CD4-positive, alpha-beta memory T cell (primary cell): ENCODE measurements at regions of chr7 and their contacts with region 1.

Region 1: GRCh38 chr7:7640221-7641128 is at the start of gene UMAD1:
- DNase-seq: peak; percentile 97 to 100 (median 100)
- H3K4me3 ChIP-seq: peak within 1 kb of the TSS; percentile 79 to 97
- H3K4me3 Mint-ChIP-seq: peak within 1 kb of the TSS; percentile 91 to 98 (median 96)
- H3K27ac ChIP-seq: peak within 1 kb of the TSS; percentile 91
- H3K27ac Mint-ChIP-seq: peak within 1 kb of the TSS; percentile 95 to 99 (median 99)
- H3K4me1 ChIP-seq: peaks cover 28% of the 10 kb centered on the region
- H3K4me1 Mint-ChIP-seq: peaks cover 25 to 62% (median 42%) of the 10 kb centered on the region in 4 donors
- H3K27me3 ChIP-seq: no peaks in the 10 kb centered on the region
- H3K27me3 Mint-ChIP-seq: no peaks in the 10 kb centered on the region
- total RNA-seq, gene UMAD1: 23.5 to 25.1 TPM

Region 2: GRCh38 chr7:7585253-7585928 is 55.1 kb before region 1 on chr7:
- CTCF ChIA-PET with region 1: no interaction called
- POLR2A ChIA-PET with region 1: no interaction called
- intact Hi-C with region 1: no loop called
- DNase-seq: no peak
- H3K4me3 ChIP-seq: no peak overlapping the region
- H3K4me3 Mint-ChIP-seq: no peak overlapping the region
- H3K27ac ChIP-seq: no peak overlapping the region
- H3K27ac Mint-ChIP-seq: peak overlapping the region in 1 of 7 donors; percentile 59
- H3K4me1 ChIP-seq: no peaks in the 10 kb centered on the region
- H3K4me1 Mint-ChIP-seq: peaks cover 0 to 4% (median 3%) of the 10 kb centered on the region in 4 donors
- H3K27me3 ChIP-seq: no peaks in the 10 kb centered on the region
- H3K27me3 Mint-ChIP-seq: no peaks in the 10 kb centered on the region

Region 3: DNA sequence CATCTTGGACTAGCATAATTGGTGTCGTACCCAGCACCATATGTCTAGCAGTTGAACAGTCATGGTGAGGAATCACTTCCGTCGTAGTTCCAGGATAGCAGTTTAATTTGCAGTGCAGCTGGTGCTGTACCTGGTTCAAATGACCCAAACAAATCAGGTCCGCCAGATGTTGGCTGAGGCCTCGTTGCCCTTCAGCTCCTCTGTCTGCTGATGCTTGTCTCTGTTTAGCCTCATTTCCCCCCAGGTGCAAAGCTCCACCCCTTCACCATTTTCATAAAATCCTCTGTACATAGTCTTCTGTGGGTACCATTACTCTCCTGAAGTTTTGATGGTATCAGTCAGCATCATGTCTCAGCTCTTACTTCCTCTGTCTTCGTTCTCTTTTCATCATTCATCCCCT is 35.2 kb after region 1 on chr7:
- CTCF ChIA-PET with region 1: no interaction called
- POLR2A ChIA-PET with region 1: interaction called, 5 read pairs
- intact Hi-C with region 1: loop called (anchors 5 kb)
- DNase-seq: no peak
- H3K4me3 ChIP-seq: no peak overlapping the region
- H3K4me3 Mint-ChIP-seq: no peak overlapping the region
- H3K27ac ChIP-seq: no peak overlapping the region
- H3K27ac Mint-ChIP-seq: peak overlapping the region in 6 of 7 donors; percentile 45 to 77 (median 65)
- H3K4me1 ChIP-seq: peaks cover 22% of the 10 kb centered on the region
- H3K4me1 Mint-ChIP-seq: peaks cover 40 to 59% (median 47%) of the 10 kb centered on the region in 4 donors
- H3K27me3 ChIP-seq: no peaks in the 10 kb centered on the region
- H3K27me3 Mint-ChIP-seq: no peaks in the 10 kb centered on the region

Region 4: GRCh38 chr7:7761340-7761980 is 121.0 kb after region 1 on chr7:
- CTCF ChIA-PET with region 1: interaction called, 3 read pairs
- POLR2A ChIA-PET with region 1: interaction called, 8 read pairs
- intact Hi-C with region 1: loop called (anchors 2 kb)
- DNase-seq: peak in 4 of 5 donors; percentile 46 to 56 (median 49)
- H3K4me3 ChIP-seq: peak overlapping the region; percentile 4 to 75
- H3K4me3 Mint-ChIP-seq: peak overlapping the region; percentile 81 to 98 (median 92)
- H3K27ac ChIP-seq: peak overlapping the region; percentile 67
- H3K27ac Mint-ChIP-seq: peak overlapping the region; percentile 89 to 98 (median 95)
- H3K4me1 ChIP-seq: peaks cover 35% of the 10 kb centered on the region
- H3K4me1 Mint-ChIP-seq: peaks cover 35 to 40% (median 39%) of the 10 kb centered on the region in 4 donors
- H3K27me3 ChIP-seq: no peaks in the 10 kb centered on the region
- H3K27me3 Mint-ChIP-seq: no peaks in the 10 kb centered on the region

Region 5: GRCh38 chr7:8125680-8126444 is 485.4 kb after region 1 on chr7:
- CTCF ChIA-PET with region 1: no interaction called
- POLR2A ChIA-PET with region 1: interaction called, 16 read pairs
- intact Hi-C with region 1: loop called (anchors 5 kb)
- DNase-seq: peak; percentile 80 to 92 (median 84)
- H3K4me3 ChIP-seq: peak overlapping the region in 1 of 2 donors; percentile 12
- H3K4me3 Mint-ChIP-seq: peak overlapping the region; percentile 46 to 89 (median 78)
- H3K27ac ChIP-seq: peak overlapping the region; percentile 73
- H3K27ac Mint-ChIP-seq: peak overlapping the region; percentile 93 to 100 (median 98)
- H3K4me1 ChIP-seq: peaks cover 94% of the 10 kb centered on the region
- H3K4me1 Mint-ChIP-seq: peaks cover 62 to 94% (median 79%) of the 10 kb centered on the region in 4 donors
- H3K27me3 ChIP-seq: no peaks in the 10 kb centered on the region
- H3K27me3 Mint-ChIP-seq: no peaks in the 10 kb centered on the region

Region 6: DNA sequence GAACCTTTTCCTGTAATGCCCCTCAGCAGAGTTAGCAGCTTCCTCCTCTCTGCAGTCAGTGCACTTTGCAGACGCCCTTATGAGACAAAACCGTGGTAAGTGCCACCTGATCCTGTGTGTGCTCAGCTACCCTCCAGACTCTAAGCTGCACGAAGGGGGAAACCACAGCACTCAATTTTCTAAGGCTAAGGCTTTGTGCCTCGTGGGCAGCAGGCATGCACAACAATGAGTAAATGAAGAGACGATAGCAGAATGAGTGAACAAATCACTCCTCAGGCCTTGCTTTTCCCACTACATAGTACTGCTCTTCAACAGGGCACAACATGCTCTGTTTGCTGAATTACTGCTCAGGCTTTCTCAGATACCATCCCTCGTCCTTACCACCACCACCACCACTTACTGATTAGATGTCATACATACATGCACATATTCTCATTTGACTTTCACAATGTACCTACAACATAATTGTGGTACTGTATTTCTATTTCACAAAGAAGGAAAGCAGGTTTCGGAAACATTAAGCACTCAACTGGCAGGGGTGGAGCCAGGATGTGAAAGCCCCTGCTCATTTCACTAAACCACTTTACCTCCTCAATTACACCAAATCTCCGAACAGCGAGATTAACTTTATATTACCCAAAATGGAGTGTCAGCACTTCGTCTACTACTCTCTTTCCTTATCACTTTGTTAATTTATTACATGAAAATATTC is 536.1 kb after region 1 on chr7:
- CTCF ChIA-PET with region 1: no interaction called
- POLR2A ChIA-PET with region 1: interaction called, 15 read pairs
- intact Hi-C with region 1: no loop called
- DNase-seq: peak; percentile 64 to 83 (median 69)
- H3K4me3 ChIP-seq: peak overlapping the region in 1 of 2 donors; percentile 34
- H3K4me3 Mint-ChIP-seq: peak overlapping the region; percentile 71 to 87 (median 80)
- H3K27ac ChIP-seq: peak overlapping the region; percentile 69
- H3K27ac Mint-ChIP-seq: peak overlapping the region; percentile 91 to 98 (median 97)
- H3K4me1 ChIP-seq: peaks cover 53% of the 10 kb centered on the region
- H3K4me1 Mint-ChIP-seq: peaks cover 45 to 65% (median 54%) of the 10 kb centered on the region in 4 donors
- H3K27me3 ChIP-seq: no peaks in the 10 kb centered on the region
- H3K27me3 Mint-ChIP-seq: no peaks in the 10 kb centered on the region

Region 7: GRCh38 chr7:8217200-8218068 is 577.0 kb after region 1 on chr7:
- CTCF ChIA-PET with region 1: no interaction called
- POLR2A ChIA-PET with region 1: interaction called, 4 read pairs
- intact Hi-C with region 1: loop called (anchors 1 kb)
- DNase-seq: peak in 4 of 5 donors; percentile 65 to 69 (median 67)
- H3K4me3 ChIP-seq: no peak overlapping the region
- H3K4me3 Mint-ChIP-seq: no peak overlapping the region
- H3K27ac ChIP-seq: no peak overlapping the region
- H3K27ac Mint-ChIP-seq: peak overlapping the region in 2 of 7 donors; percentile 26 to 47
- H3K4me1 ChIP-seq: no peaks in the 10 kb centered on the region
- H3K4me1 Mint-ChIP-seq: peaks cover 0 to 4% (median 2%) of the 10 kb centered on the region in 4 donors
- H3K27me3 ChIP-seq: no peaks in the 10 kb centered on the region
- H3K27me3 Mint-ChIP-seq: no peaks in the 10 kb centered on the region